ENCODE measurements at regions of chr19 and their contacts with region 1.

Region 1: DNA sequence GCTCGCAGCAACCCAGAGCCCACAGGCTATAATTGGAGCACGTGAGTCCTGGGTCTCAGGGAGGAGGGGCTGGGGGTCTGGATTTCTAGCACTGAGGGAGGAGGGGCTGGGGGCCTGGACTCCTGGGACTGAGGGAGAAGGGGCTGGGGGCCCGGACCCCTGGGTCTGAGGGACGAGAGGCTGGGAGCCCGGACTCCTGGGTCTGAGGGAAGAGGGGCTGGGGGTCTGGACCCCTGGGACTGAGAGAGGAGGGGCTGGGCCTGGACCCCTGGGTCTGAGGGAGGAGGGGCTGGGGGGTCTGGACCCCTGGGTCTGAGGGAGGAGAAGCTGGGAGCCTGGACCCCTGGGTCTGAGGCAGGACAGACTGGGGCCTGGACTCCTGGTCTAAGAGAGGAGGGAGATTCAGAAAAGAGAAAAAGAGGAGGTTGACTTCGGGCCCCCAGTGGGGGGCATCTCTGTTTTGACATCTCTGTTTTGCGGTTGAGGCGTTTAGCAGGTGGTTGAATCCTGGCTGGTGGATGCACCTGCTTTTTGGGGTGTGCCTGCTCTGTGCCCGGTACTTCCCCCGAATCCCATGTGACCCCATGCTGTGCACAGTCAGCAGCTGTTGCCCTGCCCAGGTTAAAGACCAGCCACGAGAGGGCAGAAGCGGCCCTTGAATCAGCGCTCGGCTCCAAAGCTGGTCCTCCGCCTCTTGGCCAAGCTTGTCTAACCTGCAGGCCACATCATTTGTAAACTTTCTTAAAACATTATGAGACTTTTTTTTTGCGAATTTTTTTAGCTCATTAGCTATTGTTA is 10.5 kb downstream of the PVR start:
- DNase-seq: peak; percentile 85 to 88 (median 87)
- ATAC-seq: peak; percentile 75 to 90 (median 81)
- H3K4me3 ChIP-seq: no peak overlapping the region
- H3K27ac ChIP-seq: no peak overlapping the region
- H3K4me1 ChIP-seq: peaks cover 0 to 16% (median 5%) of the 10 kb centered on the region in 4 donors
- H3K27me3 ChIP-seq: no peaks in the 10 kb centered on the region
- CTCF ChIP-seq: peak; percentile 63 to 84 (median 74)
- POLR2A ChIP-seq: no peak

Region 2: DNA sequence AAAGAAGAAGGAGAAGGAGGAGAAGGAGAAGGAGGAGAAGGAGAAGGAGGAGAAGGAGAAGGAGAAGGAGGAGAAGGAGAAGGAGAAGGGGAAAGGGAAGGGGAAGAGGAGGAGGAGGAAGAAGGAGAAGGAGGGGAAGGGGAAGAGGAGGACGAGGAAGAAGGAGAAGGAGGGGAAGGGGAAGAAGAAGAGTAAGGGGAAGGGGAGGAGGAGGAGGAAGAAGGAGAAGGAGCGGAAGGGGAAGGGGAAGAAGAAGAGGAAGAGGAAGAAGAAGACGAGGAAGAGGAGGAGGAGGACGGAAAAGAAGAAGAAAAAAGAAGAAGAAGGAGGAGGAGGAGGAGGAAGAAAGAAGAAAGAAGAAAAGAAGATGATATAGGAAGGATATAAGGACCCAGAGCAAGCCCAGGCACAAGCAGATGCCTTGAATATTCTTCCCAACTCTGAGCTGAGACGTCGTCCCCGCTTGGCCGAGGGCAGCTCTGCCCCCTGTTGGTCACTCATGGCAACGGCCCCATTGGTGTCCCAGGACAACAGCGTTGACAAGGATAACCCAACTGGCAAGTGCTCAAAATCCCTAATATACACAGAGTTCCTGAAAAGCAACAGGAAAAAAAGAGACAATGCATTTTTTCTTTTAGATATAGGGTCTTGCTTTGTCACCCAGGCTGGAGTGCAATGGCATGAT is 71.5 kb before region 1 on chr19:
- intact Hi-C with region 1: loop called (anchors 5 to 10 kb)
- DNase-seq: peak; percentile 37 to 69 (median 55)
- ATAC-seq: peak; percentile 55 to 85 (median 70)
- H3K4me3 ChIP-seq: no peak overlapping the region
- H3K27ac ChIP-seq: no peak overlapping the region
- H3K4me1 ChIP-seq: no peaks in the 10 kb centered on the region
- H3K27me3 ChIP-seq: no peaks in the 10 kb centered on the region
- CTCF ChIP-seq: peak; percentile 46 to 79 (median 60)
- POLR2A ChIP-seq: no peak

Region 3: DNA sequence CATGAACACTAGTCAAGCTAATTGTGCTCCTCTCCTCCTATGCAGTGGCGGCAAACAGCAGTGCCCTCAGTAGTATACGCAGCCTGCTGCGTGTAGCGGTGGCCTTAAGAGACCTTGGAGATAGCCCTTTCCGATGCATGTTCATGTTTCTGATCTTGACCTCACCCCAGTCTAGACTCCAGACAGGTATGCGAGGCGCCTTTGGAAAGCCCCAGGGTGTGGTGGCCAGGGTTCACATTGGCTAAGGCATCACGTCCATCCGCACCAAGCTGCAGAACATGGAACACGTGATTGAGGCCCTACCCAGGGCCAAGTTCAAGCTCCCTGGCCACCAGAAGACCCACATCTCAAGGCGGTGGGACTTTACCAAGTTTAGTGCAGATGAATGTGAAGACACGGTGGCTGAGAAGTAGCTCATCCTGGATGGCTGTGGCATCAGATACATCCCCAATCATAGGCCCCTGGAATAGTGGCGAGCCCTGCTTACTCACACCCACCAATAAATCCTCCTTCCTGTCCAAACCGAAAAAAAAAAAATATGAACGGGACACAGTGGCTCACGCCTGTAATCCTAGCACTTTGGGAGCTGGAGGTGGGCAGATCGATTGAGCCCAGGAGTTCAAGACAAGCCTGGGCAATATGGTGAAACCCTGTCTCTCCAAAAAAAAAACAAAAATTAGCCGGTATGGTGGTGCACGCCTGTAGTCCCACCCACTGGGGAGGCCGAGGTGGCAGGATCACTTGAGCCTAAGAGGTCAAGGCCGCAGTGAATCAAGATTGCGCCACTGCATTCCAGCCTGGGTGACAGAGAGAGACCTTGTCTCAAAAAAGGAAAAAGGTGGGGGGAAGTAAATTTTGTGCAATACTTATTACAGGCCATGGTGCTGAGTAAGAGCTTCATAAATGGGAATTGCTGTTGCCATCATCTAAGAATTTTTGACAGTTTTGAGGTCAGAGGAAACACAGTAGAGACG is 111.1 kb after region 1 on chr19:
- intact Hi-C with region 1: no loop called
- DNase-seq: peak in 2 of 3 donors; percentile 78 to 80
- ATAC-seq: peak; percentile 29 to 69 (median 58)
- H3K4me3 ChIP-seq: no peak overlapping the region
- H3K27ac ChIP-seq: peak overlapping the region in 1 of 3 donors; percentile 37
- H3K4me1 ChIP-seq: peaks cover 0 to 6% (median 3%) of the 10 kb centered on the region in 4 donors
- H3K27me3 ChIP-seq: no peaks in the 10 kb centered on the region
- CTCF ChIP-seq: no peak
- POLR2A ChIP-seq: no peak

Measured in right lobe of liver (tissue), 6 donors.